ENCODE measurements at regions of chr1 and their contacts with region 1.

Region 1: DNA sequence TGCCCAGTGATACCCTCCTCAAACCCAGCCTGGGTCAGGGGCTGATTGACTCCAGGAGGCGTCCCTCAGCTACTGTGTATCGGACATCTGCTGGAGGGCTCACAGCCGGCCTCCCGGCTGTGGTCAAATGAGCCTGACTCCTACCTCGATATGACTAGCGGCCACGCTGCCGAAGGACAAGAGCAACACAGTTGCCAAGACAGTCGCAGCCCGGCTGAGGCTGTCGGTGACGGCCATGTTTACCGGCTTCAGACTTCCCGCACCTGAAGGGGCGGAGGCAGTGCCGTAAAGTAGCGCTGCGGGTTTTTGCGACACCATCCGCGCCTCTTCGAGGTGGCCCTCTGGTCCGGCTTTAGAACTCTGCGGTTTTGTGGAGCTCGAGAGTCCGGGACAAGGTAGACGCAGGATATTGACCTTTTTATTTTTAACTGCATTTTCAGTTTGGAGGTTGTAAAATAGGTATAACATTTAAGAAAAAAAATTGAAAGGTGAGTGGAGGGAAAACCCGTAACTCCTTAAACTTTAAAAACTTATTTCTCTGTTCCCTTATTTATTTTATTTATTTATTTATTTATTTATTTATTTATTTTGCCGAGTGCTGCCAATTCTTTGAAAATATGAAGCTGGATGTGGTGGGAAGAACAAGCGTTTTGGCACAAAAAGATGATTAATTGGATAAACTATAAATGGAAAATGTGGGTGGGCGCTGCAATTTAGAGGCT is at the start of gene PIGK:
- DNase-seq: peak; percentile 71 to 92 (median 86)
- ATAC-seq: peak; percentile 97
- H3K4me3 ChIP-seq: peak within 1 kb of the TSS; percentile 96 to 97
- H3K4me3 Mint-ChIP-seq: peak within 1 kb of the TSS; percentile 96
- H3K27ac ChIP-seq: peak within 1 kb of the TSS; percentile 80 to 84
- H3K27ac Mint-ChIP-seq: peak within 1 kb of the TSS; percentile 97
- H3K4me1 ChIP-seq: peaks cover 25% of the 10 kb centered on the region
- H3K4me1 Mint-ChIP-seq: peaks cover 58% of the 10 kb centered on the region
- H3K27me3 ChIP-seq: no peaks in the 10 kb centered on the region
- H3K27me3 Mint-ChIP-seq: no peaks in the 10 kb centered on the region
- CTCF ChIP-seq: no peak
- total RNA-seq, gene PIGK: 4.5 to 7.1 TPM

Region 2: DNA sequence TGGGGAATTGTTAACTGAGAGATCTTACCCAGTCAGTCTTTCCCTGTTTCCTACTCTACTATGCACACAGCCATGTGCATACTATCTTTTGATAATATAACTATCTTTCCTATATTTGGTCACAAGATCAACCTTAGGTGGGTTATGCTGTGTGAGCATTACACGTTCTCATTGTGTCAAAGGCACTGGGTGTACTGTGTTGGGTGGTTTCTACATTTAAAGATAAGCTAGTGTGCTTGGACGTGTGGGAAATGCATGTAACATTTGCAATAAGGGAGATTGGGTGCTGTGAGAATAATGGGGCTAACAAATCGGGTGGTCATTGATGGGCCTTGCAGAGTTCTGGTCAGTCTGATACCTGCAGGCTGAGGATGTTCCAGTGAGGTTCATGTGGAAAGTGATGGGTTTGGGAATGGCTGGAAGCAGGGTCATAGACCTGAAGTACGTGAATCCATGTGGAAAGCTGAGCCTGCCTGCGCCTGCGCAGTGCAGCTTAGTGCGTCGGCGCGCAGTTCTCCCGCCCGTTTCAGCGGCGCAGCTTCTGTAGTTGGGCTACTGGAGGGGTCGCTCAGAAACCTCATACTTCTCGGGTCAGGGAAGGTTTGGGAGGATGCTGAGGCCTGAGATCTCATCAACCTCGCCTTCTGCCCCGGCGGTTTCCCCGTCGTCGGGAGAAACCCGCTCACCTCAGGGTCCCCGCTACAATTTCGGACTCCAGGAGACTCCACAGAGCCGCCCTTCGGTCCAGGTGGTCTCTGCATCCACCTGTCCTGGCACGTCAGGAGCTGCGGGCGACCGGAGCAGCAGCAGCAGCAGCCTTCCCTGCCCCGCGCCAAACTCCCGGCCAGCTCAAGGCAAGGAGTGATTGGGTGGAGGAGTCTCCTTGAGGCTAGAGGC is 1422.7 kb before region 1 on chr1 and contains the start of gene MSH4:
- CTCF ChIA-PET with region 1: no interaction called
- POLR2A ChIA-PET with region 1: no interaction called
- intact Hi-C with region 1: loop called in 1 of 2 experiments (anchors 10 kb)
- DNase-seq: peak in 1 of 9 experiments; percentile 7
- ATAC-seq: no peak
- H3K4me3 ChIP-seq: no peak within 1 kb of the TSS
- H3K4me3 Mint-ChIP-seq: no peak within 1 kb of the TSS
- H3K27ac ChIP-seq: no peak within 1 kb of the TSS
- H3K27ac Mint-ChIP-seq: peak within 1 kb of the TSS; percentile 61
- H3K4me1 ChIP-seq: no peaks in the 10 kb centered on the region
- H3K4me1 Mint-ChIP-seq: peaks cover 15% of the 10 kb centered on the region
- H3K27me3 ChIP-seq: no peaks in the 10 kb centered on the region
- H3K27me3 Mint-ChIP-seq: no peaks in the 10 kb centered on the region
- CTCF ChIP-seq: no peak
- total RNA-seq, gene MSH4: 0.08 TPM in 1 of 2 experiments, not detected in the other

Region 3: DNA sequence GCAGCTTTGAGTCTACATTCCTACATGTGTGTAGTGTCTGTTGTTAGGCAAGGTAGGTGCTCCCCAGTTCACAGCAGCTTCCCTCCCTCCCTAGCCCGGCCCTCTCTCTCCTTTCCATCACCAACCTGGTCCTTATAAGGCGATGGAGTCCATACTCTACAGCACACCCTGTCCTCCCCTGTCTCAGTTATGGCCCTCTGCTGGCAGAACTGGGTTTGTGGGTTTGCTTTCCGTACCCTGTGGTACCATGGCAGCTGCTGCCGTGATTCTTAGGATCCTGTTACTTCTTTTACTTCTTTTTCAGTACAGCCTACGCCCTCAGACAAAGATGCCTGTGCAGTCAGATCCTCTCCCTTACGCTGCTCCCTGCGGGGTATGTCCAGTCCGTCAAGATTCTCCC is 94.2 kb after region 1 on chr1:
- CTCF ChIA-PET with region 1: no interaction called
- POLR2A ChIA-PET with region 1: interaction called, 3 read pairs
- intact Hi-C with region 1: loop called in 1 of 2 experiments (anchors 2 kb)
- DNase-seq: peak in 6 of 9 experiments; percentile 25 to 66 (median 34)
- ATAC-seq: peak; percentile 51
- H3K4me3 ChIP-seq: no peak overlapping the region
- H3K4me3 Mint-ChIP-seq: no peak overlapping the region
- H3K27ac ChIP-seq: no peak overlapping the region
- H3K27ac Mint-ChIP-seq: peak overlapping the region; percentile 11
- H3K4me1 ChIP-seq: peaks cover 34% of the 10 kb centered on the region
- H3K4me1 Mint-ChIP-seq: peaks cover 34% of the 10 kb centered on the region
- H3K27me3 ChIP-seq: no peaks in the 10 kb centered on the region
- H3K27me3 Mint-ChIP-seq: no peaks in the 10 kb centered on the region
- CTCF ChIP-seq: no peak

Region 4: DNA sequence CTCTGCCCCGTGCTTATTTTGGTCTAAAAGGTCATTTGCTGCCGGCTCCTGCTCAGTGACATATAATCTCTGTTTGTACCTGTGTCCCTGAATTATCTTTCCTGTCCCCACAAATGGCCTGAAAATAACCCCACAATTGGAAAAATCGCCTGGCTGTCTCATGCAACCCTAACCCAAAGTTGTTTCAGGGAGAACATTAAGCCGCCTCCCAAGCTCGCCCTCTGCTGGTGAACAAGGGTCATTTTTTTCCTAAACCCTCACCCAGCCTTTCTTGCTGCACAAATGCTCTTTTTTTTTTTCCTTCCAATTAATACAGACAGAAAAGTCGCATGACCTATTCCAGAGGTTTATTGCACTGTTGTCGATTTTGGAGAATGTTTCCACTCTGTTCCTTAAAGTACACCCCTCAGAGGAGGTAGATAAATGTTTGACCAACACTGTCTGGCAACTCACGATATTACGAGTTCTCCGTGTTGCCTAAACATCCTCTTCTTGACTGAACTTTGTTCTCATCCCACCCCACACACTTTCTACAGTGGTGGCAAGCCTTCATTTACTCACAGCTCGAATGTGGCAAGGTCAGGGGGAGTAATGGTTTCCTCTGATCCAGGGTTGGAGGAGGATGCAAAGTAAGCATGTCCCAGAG is 314.5 kb after region 1 on chr1:
- CTCF ChIA-PET with region 1: interaction called, 8 read pairs
- POLR2A ChIA-PET with region 1: no interaction called
- intact Hi-C with region 1: loop called in 1 of 2 experiments (anchors 5 kb)
- DNase-seq: peak; percentile 26 to 77 (median 61)
- ATAC-seq: peak; percentile 62
- H3K4me3 ChIP-seq: no peak overlapping the region
- H3K4me3 Mint-ChIP-seq: peak overlapping the region; percentile 38
- H3K27ac ChIP-seq: no peak overlapping the region
- H3K27ac Mint-ChIP-seq: peak overlapping the region; percentile 21
- H3K4me1 ChIP-seq: peaks cover 9% of the 10 kb centered on the region
- H3K4me1 Mint-ChIP-seq: peaks cover 7% of the 10 kb centered on the region
- H3K27me3 ChIP-seq: no peaks in the 10 kb centered on the region
- H3K27me3 Mint-ChIP-seq: no peaks in the 10 kb centered on the region
- CTCF ChIP-seq: peak; percentile 91

Region 5: DNA sequence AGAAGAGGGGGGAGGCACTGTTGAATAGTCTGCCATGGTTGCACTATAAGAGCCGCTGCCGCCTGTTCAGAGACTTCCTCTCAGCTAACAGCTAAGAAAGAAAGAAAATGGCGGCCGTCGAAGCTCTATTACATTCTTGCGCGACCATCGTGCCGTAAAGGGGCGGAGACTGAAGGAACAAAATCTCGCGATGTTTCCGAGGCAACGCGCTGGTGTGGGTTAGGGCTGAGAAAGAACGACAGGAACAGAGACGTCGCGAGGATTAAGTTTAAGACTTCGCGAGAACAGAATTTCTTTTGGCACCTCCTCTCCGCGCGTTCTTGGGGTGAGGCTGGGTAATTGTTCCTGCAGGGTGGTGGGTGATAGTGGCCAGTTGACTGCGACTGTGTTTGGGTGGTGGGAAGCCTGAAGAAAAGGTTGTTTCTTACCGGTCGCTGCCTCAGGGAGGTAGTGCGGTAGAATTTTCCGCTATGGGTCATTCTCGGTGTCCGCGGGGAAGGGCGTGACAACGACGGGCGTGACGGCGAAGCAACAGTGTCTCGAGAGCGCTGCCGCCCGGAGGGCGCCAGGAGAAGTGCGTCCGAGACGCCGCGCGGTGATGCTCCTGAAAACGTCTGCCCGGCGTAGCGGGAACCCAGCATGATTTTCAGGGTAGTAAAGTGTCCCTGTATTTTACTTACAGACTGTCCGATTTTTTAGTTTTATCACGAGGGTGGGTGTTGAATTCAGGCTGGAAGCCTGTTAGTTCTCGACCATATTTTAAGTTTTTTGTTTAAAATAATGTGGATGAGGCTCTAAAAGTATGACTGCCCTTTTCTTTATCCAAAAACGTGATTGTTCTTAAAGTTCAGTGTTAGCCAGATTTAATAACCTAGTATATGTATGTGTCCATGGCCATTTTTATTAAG is 759.9 kb after region 1 on chr1 and contains the start of gene FUBP1:
- CTCF ChIA-PET with region 1: no interaction called
- POLR2A ChIA-PET with region 1: interaction called, 4 read pairs
- intact Hi-C with region 1: loop called in 1 of 2 experiments (anchors 10 kb)
- DNase-seq: peak; percentile 91 to 99 (median 94)
- ATAC-seq: peak; percentile 75
- H3K4me3 ChIP-seq: peak within 1 kb of the TSS; percentile 88 to 99
- H3K4me3 Mint-ChIP-seq: no peak within 1 kb of the TSS
- H3K27ac ChIP-seq: peak within 1 kb of the TSS; percentile 98 to 100
- H3K27ac Mint-ChIP-seq: no peak within 1 kb of the TSS
- H3K4me1 ChIP-seq: peaks cover 45% of the 10 kb centered on the region
- H3K4me1 Mint-ChIP-seq: peaks cover 45% of the 10 kb centered on the region
- H3K27me3 ChIP-seq: no peaks in the 10 kb centered on the region
- H3K27me3 Mint-ChIP-seq: no peaks in the 10 kb centered on the region
- CTCF ChIP-seq: peak; percentile 75
- total RNA-seq, gene FUBP1: 212 to 217 TPM

Region 6: GRCh38 chr1:78649628-78650027 is 1430.3 kb after region 1 on chr1 and contains the start of gene IFI44:
- CTCF ChIA-PET with region 1: no interaction called
- POLR2A ChIA-PET with region 1: no interaction called
- intact Hi-C with region 1: loop called in 1 of 2 experiments (anchors 5 kb)
- DNase-seq: peak; percentile 50 to 90 (median 74)
- ATAC-seq: peak; percentile 81
- H3K4me3 ChIP-seq: peak within 1 kb of the TSS; percentile 49 to 52
- H3K4me3 Mint-ChIP-seq: peak within 1 kb of the TSS; percentile 83
- H3K27ac ChIP-seq: peak within 1 kb of the TSS; percentile 40 to 65
- H3K27ac Mint-ChIP-seq: peak within 1 kb of the TSS; percentile 88
- H3K4me1 ChIP-seq: peaks cover 50% of the 10 kb centered on the region
- H3K4me1 Mint-ChIP-seq: peaks cover 75% of the 10 kb centered on the region
- H3K27me3 ChIP-seq: no peaks in the 10 kb centered on the region
- H3K27me3 Mint-ChIP-seq: no peaks in the 10 kb centered on the region
- CTCF ChIP-seq: no peak
- total RNA-seq, gene IFI44: 24.2 to 30.5 TPM